Sigmoid colon (tissue), 7 donors: ENCODE measurements at regions of chr2 and their contacts with region 1.

Region 1: DNA sequence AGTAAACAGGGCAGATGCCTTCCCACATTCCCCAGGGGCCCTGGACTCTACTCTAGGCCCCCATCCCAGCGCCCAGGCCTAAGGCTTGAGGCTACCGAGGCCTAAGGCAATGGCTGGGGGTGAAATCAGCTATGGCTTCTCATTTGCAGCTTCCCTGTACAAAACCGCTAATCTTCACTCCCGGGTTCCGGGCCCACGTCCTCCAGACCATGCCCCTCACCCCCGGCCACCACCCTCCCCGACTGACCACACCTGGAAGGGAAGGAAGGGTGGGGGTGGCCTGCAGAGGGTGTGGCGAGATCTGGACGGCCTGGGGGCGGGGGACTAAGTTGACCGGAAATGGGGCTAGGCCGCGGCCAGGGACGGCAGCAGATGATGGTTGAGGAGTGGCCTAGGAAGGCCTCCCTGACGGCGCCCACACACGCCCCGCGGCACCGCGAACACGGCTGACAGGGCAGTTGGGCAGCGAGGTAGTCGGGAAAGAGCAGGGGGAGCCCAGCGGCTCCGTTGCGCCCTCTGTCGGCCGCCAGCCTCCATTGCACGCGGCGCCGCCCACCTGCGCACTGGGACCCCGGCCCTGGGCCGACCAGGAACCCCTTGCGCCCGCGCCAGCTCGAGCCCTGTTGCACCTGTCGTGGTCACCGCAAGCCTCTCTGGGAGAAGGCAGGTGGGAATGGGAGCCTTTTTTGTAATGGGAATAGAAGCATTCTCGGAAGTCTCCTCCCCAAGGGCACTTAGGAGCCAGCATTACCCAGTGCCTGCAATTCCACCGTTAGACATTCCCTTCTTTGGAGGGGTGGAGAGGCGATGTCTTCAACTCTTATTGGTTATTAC is 117.1 kb upstream of the STPG4 start:
- DNase-seq: peak; percentile 77
- H3K4me3 ChIP-seq: peak overlapping the region; percentile 2 to 40 (median 24)
- H3K27ac ChIP-seq: peak overlapping the region; percentile 56 to 82 (median 79)
- H3K4me1 ChIP-seq: peaks cover 3 to 46% (median 37%) of the 10 kb centered on the region in 4 donors
- H3K27me3 ChIP-seq: no peaks in the 10 kb centered on the region
- CTCF ChIP-seq: peak; percentile 94 to 100 (median 96)
- EP300 ChIP-seq: no peak
- POLR2A ChIP-seq: no peak

Region 2: GRCh38 chr2:47230418-47230817 is 41.8 kb before region 1 on chr2:
- intact Hi-C with region 1: loop called (anchors 5 kb)
- DNase-seq: peak; percentile 93
- H3K4me3 ChIP-seq: no peak overlapping the region
- H3K27ac ChIP-seq: peak overlapping the region; percentile 52 to 83 (median 68)
- H3K4me1 ChIP-seq: peaks cover 0 to 36% (median 26%) of the 10 kb centered on the region in 4 donors
- H3K27me3 ChIP-seq: no peaks in the 10 kb centered on the region
- CTCF ChIP-seq: no peak
- EP300 ChIP-seq: peak in 1 of 4 donors; percentile 30
- POLR2A ChIP-seq: no peak

Region 3: DNA sequence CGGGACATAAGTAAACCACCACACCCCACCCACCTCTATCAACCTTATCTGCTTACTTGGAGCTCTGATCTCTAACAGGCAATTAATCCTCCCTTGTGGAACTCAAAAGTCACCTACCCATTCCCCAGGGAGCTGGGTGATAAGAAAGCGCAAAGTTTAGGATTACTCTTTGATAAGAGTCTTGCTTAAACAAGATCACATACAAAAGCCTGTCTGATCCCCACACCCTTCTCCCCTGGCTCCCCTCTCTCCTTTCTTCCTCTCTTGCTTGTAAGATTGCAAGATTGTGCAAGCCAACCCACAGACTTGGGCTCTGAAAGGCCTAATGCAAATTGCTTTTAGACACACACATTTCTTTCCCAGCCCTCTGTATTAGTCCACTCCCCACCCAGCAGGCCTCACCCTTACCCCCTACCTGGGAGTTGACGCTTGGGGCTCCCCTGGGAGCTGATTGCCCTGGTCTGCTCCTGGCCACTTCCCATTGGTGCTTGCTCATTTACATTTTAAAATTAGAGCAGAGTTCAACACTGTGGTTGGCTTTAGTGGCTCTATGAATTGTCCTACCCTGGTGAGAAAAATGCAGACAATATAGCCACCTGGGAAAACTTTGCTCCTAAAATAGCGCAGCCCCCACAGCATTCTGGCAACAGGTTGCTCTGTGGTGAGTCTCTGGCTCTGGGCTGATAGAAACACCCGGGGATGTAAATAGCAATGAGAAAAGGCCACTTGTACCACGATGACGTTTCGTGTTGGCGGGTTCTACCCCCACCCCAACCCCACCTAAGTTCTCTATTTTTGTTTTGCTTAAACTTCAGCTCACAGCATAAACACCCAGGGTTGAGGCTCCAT is 37.9 kb after region 1 on chr2:
- intact Hi-C with region 1: loop called (anchors 2 kb)
- DNase-seq: no peak
- H3K4me3 ChIP-seq: no peak overlapping the region
- H3K27ac ChIP-seq: peak overlapping the region; percentile 55 to 68 (median 61)
- H3K4me1 ChIP-seq: peaks cover 0 to 36% (median 22%) of the 10 kb centered on the region in 4 donors
- H3K27me3 ChIP-seq: no peaks in the 10 kb centered on the region
- CTCF ChIP-seq: no peak
- EP300 ChIP-seq: no peak
- POLR2A ChIP-seq: no peak